PC-3 (cell line): ENCODE measurements at regions of chr12 and their contacts with region 1.

Region 1: GRCh38 chr12:95820102-95820703 is 29.6 kb upstream of the NTN4 start:
- DNase-seq: peak; percentile 88
- ATAC-seq: peak; percentile 51
- H3K4me3 ChIP-seq: no peak overlapping the region
- H3K27ac ChIP-seq: no peak overlapping the region
- H3K4me1 ChIP-seq: peaks cover 4% of the 10 kb centered on the region; the same call in 1 of the 2 replicates
- H3K27me3 ChIP-seq: no peaks in the 10 kb centered on the region
- CTCF ChIP-seq: peak; percentile 90

Region 2: DNA sequence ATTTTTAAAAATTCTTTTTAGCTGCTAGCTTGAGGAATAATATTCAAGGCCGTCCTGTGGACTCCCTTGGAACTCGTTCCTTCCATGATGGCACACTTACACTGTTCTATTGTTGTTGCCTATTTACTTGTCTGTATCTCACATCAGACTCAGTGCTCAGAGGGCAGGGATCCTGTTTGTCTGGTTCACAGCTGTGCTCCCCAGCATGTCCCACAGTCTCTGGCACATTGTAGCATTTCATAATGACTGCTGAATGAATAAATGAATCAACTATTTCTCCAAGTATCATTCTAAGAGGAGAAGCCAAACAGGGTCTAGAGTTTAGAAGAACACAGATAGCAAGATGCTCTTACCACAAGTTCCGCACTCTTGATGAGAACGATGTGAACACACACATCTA is 77.6 kb before region 1 on chr12:
- CTCF ChIA-PET with region 1: no interaction called
- POLR2A ChIA-PET with region 1: no interaction called
- intact Hi-C with region 1: loop called (anchors 2 kb)
- DNase-seq: no peak
- ATAC-seq: no peak
- H3K4me3 ChIP-seq: no peak overlapping the region
- H3K27ac ChIP-seq: no peak overlapping the region
- H3K4me1 ChIP-seq: 0 out of 2 replicates have a peak, but pooled peaks cover 4% of the 10 kb centered on the region
- H3K27me3 ChIP-seq: no peaks in the 10 kb centered on the region
- CTCF ChIP-seq: no peak

Region 3: DNA sequence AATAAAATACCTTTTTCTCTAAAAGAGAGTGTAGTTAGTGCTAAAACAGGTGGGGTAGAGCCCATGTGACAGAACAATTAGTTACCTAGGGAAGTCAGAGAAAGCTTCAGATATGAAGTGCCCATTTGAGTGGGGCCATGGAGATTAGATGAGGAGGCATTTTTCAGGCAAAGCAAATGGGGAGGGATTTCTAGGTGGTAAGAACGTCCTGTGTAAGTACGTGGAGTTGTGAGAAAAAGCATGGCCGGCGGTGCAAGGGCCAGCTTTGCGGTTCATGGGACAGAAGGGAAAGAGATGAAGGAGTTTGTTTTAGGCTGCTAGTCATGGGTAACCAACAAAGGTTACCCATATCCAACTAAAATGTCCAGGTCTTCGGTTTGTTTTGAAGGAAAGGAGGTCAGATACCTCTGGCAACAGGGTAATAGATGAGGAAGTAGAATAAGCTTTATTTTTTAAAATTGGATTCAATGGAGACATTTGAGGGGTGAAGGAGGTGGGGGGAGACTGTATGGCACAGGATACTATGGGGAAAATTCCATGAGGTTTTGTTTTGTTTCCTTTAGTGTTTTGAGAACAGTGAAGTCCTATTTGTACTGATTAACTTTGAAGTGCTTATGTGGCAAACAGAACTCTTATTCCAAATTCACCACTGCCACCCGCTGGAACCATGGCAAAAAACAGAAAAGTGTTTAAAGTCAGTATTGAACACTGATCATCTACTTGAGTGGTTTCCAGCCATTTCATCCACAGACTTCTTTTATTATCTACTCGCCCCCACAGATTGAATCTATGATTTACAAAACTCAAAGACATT is 28.6 kb after region 1 on chr12:
- CTCF ChIA-PET with region 1: no interaction called
- POLR2A ChIA-PET with region 1: no interaction called
- intact Hi-C with region 1: loop called (anchors 1 kb)
- DNase-seq: peak; percentile 67
- ATAC-seq: peak; percentile 94
- H3K4me3 ChIP-seq: no peak overlapping the region
- H3K27ac ChIP-seq: no peak overlapping the region
- H3K4me1 ChIP-seq: no peaks in the 10 kb centered on the region
- H3K27me3 ChIP-seq: no peaks in the 10 kb centered on the region
- CTCF ChIP-seq: peak; percentile 71